PC-3 (cell line): ENCODE measurements at regions of chr2 and their contacts with region 1.

Region 1: DNA sequence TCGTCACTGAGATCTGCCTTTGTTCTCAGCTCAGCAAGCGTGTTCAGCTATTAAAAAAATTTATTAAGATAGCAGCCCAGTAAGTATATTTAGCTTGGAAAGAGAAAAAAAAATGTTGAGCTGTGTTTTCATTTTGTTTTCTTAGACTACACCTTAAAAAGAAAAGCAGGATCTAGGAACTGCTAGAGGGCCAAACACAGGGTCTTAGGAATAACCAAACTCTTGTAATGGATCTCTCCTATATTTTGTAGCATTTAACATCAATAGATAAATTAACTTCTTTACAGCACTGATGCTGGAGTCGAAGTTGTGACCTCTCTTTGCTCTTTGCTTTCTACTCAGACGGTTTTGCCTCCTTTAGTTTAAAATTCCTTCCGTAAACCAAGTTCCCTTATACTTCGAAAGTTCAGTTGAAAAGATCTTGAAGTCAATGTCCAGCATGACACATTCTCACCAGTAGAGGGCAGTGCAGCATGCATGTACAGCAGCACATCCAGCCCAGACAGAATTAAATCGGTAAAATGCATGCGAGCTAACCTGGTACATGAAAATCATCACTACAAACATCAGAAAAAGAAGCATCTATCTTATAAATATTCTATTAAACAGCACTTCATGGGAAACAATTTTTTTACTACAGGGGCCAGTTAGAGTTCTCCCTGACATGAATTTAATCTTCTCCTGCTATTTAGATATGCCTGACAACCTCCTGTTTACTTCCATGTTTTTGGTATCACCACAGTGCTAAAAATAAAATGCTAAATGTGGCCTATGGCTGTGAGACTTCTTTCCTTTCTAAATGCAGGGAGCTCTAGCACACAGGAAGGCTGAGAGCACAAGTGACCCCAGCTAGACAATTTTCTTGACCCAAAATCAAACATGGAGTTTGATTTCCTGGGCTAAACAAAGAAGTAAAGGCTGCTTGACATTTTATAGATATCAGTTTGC is 48.2 kb upstream of the MAP3K20 start:
- DNase-seq: peak; percentile 93
- ATAC-seq: peak; percentile 88
- H3K4me3 ChIP-seq: no peak overlapping the region
- H3K27ac ChIP-seq: no peak overlapping the region
- H3K4me1 ChIP-seq: peaks cover 4% of the 10 kb centered on the region
- H3K27me3 ChIP-seq: no peaks in the 10 kb centered on the region
- CTCF ChIP-seq: peak; percentile 96

Region 2: GRCh38 chr2:173075781-173076580 is 48.5 kb after region 1 on chr2 and contains the start of gene MAP3K20:
- CTCF ChIA-PET with region 1: no interaction called
- POLR2A ChIA-PET with region 1: no interaction called
- intact Hi-C with region 1: loop called (anchors 1 kb)
- DNase-seq: peak; percentile 60
- ATAC-seq: peak; percentile 53
- H3K4me3 ChIP-seq: peak within 1 kb of the TSS; percentile 90
- H3K27ac ChIP-seq: peak within 1 kb of the TSS; percentile 86
- H3K4me1 ChIP-seq: peaks cover 38% of the 10 kb centered on the region
- H3K27me3 ChIP-seq: no peaks in the 10 kb centered on the region
- CTCF ChIP-seq: peak; percentile 42
- total RNA-seq, gene MAP3K20: 23.1 and 29.8 TPM in 2 replicates

Region 3: DNA sequence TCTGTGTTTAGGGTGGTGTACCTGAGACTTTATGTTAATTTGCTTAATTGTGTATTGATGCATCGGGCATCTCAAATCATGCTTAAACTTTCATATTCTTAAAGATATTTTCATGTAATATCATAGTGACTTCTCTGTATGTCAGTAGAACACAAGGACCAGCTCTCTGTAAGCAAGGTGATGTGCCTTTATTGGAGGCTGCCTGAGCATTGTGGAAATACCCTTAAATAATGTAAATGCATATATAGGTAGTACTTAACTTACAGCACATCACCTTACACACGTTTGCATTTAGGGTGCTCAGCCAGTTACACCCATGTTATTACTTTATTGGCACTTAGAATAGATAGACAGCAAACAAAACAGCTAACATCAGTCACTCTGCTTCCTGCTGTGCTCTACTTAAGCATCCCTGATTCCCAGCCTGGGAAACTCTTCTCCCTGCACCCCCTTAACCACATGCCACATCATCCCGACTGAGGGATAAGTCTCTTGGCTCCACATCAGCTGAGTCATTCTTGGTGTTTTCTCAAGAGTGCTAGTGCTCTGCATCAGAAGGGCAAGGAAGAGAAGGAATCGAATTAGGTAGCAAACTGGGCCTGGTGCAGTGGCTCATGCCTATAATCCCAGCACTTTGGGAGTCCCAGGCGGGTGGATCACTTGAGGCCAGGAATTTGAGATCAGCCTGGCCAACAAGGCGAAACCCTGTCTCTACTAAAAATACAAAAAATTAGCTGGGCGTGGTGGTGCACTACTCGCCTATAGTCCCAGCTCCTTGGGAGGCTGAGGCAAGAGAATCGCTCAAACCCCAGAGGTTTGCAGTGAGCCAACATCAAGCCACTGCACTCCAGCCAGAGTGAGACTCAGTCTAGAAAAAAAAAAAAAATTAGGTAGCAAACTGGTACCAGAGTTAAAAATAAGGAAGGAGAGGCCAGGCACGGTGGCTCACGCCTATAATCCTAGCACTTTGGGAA is 156.9 kb after region 1 on chr2:
- CTCF ChIA-PET with region 1: no interaction called
- POLR2A ChIA-PET with region 1: no interaction called
- intact Hi-C with region 1: loop called (anchors 1 kb)
- DNase-seq: peak; percentile 98
- ATAC-seq: peak; percentile 99
- H3K4me3 ChIP-seq: no peak overlapping the region
- H3K27ac ChIP-seq: peak overlapping the region; percentile 74
- H3K4me1 ChIP-seq: peaks cover 27% of the 10 kb centered on the region
- H3K27me3 ChIP-seq: no peaks in the 10 kb centered on the region
- CTCF ChIP-seq: no peak

Region 4: GRCh38 chr2:173354601-173355131 is 327.2 kb after region 1 on chr2 and contains the start of gene CDCA7:
- CTCF ChIA-PET with region 1: no interaction called
- POLR2A ChIA-PET with region 1: no interaction called
- intact Hi-C with region 1: loop called (anchors 1 kb)
- DNase-seq: peak; percentile 76
- ATAC-seq: peak; percentile 78
- H3K4me3 ChIP-seq: peak within 1 kb of the TSS; percentile 79
- H3K27ac ChIP-seq: peak within 1 kb of the TSS; percentile 69
- H3K4me1 ChIP-seq: peaks cover 20% of the 10 kb centered on the region
- H3K27me3 ChIP-seq: no peaks in the 10 kb centered on the region
- CTCF ChIP-seq: no peak
- total RNA-seq, gene CDCA7: 29.3 and 36.4 TPM in 2 replicates

Region 5: GRCh38 chr2:173394091-173394974 is 366.9 kb after region 1 on chr2:
- CTCF ChIA-PET with region 1: no interaction called
- POLR2A ChIA-PET with region 1: no interaction called
- intact Hi-C with region 1: no loop called
- DNase-seq: no peak
- ATAC-seq: no peak
- H3K4me3 ChIP-seq: no peak overlapping the region
- H3K27ac ChIP-seq: no peak overlapping the region
- H3K4me1 ChIP-seq: peaks cover 3% of the 10 kb centered on the region; the same call in 1 of the 2 replicates
- H3K27me3 ChIP-seq: no peaks in the 10 kb centered on the region
- CTCF ChIP-seq: no peak

Region 6: GRCh38 chr2:174341286-174341994 is 1314.0 kb after region 1 on chr2:
- CTCF ChIA-PET with region 1: no interaction called
- POLR2A ChIA-PET with region 1: no interaction called
- intact Hi-C with region 1: loop called (anchors 5 kb)
- DNase-seq: peak; percentile 93
- ATAC-seq: peak; percentile 68
- H3K4me3 ChIP-seq: peak overlapping the region; percentile 62
- H3K27ac ChIP-seq: peak overlapping the region; percentile 21
- H3K4me1 ChIP-seq: peaks cover 23% of the 10 kb centered on the region
- H3K27me3 ChIP-seq: no peaks in the 10 kb centered on the region
- CTCF ChIP-seq: peak; percentile 98